ENCODE measurements at regions of chr5 and their contacts with region 1.

Region 1: GRCh38 chr5:37146896-37147295 is 102.3 kb downstream of the CPLANE1 start:
- DNase-seq: no peak
- H3K4me3 ChIP-seq: no peak overlapping the region
- H3K27ac ChIP-seq: no peak overlapping the region
- H3K4me1 ChIP-seq: no peaks in the 10 kb centered on the region
- CTCF ChIP-seq: no peak

Region 2: DNA sequence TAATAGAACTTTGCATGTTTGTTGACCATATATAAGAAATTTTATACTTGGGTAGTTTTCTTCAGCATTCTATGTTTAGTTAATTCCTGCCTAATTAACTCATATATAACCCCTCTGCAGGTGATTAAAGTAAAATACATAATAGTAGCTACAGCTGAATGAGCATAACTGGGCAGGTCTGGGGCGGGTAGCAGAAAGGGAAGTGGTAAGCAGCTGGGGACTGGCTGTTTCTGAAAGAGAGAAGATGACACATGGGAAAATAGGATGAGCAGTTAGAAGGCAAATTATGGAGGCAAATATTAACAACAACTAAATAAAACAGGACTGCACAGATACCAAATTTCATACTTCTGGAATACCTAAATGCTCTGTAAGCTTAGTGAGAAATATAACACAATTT is 25.9 kb before region 1 on chr5:
- CTCF ChIA-PET with region 1: no interaction called
- POLR2A ChIA-PET with region 1: interaction called, 11 read pairs
- intact Hi-C with region 1: no loop called
- DNase-seq: peak; percentile 34
- H3K4me3 ChIP-seq: no peak overlapping the region
- H3K27ac ChIP-seq: no peak overlapping the region
- H3K4me1 ChIP-seq: peaks cover 16% of the 10 kb centered on the region
- CTCF ChIP-seq: no peak

Region 3: GRCh38 chr5:37248970-37249686 is 102.2 kb after region 1 on chr5 and contains the start of gene CPLANE1:
- CTCF ChIA-PET with region 1: no interaction called
- POLR2A ChIA-PET with region 1: no interaction called
- intact Hi-C with region 1: no loop called
- DNase-seq: no peak
- H3K4me3 ChIP-seq: no peak within 1 kb of the TSS
- H3K27ac ChIP-seq: no peak within 1 kb of the TSS
- H3K4me1 ChIP-seq: no peaks in the 10 kb centered on the region
- CTCF ChIP-seq: no peak
- total RNA-seq, gene CPLANE1: not detected in 2 replicates